Adrenal gland (tissue), 19 donors: ENCODE measurements at regions of chr3 and their contacts with region 1.

Region 1: DNA sequence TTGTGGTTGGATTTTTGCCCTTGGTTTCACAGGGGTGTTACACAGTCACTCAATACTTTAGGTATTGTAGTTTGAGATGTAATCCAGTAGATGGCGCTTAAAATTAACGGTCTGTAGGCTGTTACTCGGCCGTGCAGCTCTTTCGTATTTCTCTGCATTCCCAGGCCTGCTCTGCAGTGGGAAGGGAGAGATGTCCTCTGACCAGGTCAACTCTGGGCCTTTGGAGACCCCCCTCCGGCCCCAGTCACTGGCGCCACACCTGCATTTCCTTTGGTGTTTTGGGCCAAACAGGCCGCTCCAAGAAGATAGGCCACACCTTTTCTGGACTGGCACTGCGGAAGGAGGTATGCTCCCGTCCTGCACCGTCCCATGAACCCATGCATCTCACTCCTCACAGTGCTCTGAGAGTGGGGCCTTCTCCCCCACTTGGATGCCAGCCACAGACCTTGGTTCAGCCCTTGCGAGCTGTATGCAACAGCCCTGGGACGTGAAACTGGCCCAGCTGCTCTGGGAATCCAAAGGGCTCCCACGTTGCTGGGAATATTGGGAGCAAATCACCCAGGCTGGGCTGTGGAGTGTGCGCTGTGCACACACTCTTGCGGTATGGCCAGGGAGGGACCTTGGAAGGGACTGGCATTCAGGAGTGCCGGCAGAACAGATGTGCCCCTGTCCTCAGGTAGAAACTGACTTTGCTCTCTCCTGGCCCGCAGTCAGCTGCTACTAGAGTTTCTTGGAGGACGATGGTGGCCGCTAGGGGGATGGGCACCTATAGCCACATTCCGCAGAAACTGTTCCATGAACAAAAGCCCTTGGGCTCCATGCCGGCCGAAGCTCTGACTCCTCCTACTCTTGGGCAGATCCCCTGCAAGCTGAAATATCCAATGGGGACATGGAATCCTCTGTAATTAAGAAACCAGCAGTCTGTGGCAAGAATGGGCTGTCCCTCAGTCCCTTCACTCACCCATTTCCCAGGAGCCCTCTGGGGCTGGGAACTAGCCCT is 410.5 kb upstream of the CADM2 start:
- DNase-seq: peak in 5 of 7 donors; percentile 9 to 30 (median 27)
- H3K4me3 ChIP-seq: no peak overlapping the region
- H3K27ac ChIP-seq: no peak overlapping the region
- H3K4me1 ChIP-seq: no peaks in the 10 kb centered on the region
- H3K27me3 ChIP-seq: no peaks in the 10 kb centered on the region
- CTCF ChIP-seq: peak; percentile 38 to 54 (median 46)
- POLR2A ChIP-seq: no peak

Region 2: GRCh38 chr3:84318273-84318809 is 229.9 kb before region 1 on chr3:
- intact Hi-C with region 1: no loop called
- DNase-seq: no peak
- H3K4me3 ChIP-seq: no peak overlapping the region
- H3K27ac ChIP-seq: no peak overlapping the region
- H3K4me1 ChIP-seq: no peaks in the 10 kb centered on the region
- H3K27me3 ChIP-seq: no peaks in the 10 kb centered on the region
- CTCF ChIP-seq: no peak
- POLR2A ChIP-seq: no peak

Region 3: DNA sequence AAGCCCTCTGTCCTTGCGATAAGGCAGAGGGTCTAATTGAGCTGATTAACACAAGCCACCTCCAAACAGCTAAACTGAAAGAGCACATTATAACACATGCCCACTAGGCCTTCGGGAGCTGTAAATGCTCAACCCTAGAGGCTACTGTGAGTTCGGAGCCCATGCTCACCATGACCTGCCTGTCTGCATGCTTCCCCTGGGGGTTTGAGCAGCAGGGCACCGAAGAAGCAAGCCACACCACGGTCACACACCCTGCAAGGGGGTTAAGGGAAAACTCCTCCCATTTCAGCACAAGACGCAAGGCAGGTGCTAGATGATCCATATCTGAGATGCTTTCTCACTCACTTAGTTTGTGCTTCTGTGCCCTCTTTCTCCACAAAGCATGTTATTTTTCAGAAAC is 25.4 kb before region 1 on chr3:
- intact Hi-C with region 1: no loop called
- DNase-seq: no peak
- H3K4me3 ChIP-seq: no peak overlapping the region
- H3K27ac ChIP-seq: no peak overlapping the region
- H3K4me1 ChIP-seq: no peaks in the 10 kb centered on the region
- H3K27me3 ChIP-seq: no peaks in the 10 kb centered on the region
- CTCF ChIP-seq: no peak
- POLR2A ChIP-seq: no peak

Region 4: DNA sequence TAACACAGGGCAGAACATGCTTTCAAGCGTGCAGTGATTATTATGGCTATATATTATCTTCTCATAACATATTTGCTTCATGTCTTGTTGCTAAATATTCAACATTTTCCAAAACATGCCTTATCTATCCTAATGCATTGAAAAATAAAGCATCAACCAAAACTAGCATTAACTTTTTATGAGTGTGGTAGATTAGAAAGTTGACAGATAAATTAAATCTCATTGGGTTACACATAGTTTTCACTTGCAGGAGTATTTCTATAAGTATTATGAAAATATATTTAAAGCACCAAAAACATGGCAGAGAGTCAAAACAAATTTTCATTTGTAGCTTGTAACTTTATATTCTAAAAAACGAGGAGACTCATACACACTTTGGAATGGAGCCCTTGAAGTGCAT is 552.0 kb after region 1 on chr3:
- intact Hi-C with region 1: no loop called
- DNase-seq: no peak
- H3K4me3 ChIP-seq: no peak overlapping the region
- H3K27ac ChIP-seq: no peak overlapping the region
- H3K4me1 ChIP-seq: no peaks in the 10 kb centered on the region
- H3K27me3 ChIP-seq: no peaks in the 10 kb centered on the region
- CTCF ChIP-seq: no peak
- POLR2A ChIP-seq: no peak

Region 5: DNA sequence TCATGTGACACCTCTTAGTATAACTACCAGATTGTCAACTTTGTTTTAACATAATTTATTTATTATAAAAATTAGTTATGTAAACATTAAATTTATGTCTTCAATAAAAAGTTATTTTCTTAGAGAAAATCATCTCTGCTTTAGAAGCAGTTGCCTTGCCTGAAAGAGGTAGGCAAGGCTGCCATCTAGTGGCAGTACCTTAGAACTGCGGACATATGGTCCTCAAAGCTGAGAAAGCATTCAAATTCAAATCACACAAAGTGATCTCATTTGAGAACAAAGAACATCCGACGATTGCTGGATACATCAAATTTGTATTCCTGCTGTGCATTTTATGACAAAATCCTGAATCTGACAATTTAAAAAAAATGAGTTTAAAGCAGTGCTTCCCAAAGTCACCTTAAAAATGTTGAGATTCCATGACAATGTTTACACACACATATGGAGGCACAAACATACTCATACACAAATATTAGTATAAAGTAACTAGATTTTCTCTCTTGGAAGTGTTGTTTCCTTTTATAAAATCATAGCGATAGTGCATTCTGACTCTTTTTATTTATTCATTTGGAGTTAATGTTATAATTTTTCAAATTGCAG is 1027.9 kb after region 1 on chr3:
- intact Hi-C with region 1: loop called in 1 of 2 experiments (anchors 5 kb)
- DNase-seq: peak; percentile 30 to 90 (median 68)
- H3K4me3 ChIP-seq: no peak overlapping the region
- H3K27ac ChIP-seq: no peak overlapping the region
- H3K4me1 ChIP-seq: no peaks in the 10 kb centered on the region
- H3K27me3 ChIP-seq: no peaks in the 10 kb centered on the region
- CTCF ChIP-seq: peak; percentile 54 to 86 (median 70)
- POLR2A ChIP-seq: no peak